HCT116 (cell line): ENCODE measurements at regions of chr20 and their contacts with region 1.

Region 1: DNA sequence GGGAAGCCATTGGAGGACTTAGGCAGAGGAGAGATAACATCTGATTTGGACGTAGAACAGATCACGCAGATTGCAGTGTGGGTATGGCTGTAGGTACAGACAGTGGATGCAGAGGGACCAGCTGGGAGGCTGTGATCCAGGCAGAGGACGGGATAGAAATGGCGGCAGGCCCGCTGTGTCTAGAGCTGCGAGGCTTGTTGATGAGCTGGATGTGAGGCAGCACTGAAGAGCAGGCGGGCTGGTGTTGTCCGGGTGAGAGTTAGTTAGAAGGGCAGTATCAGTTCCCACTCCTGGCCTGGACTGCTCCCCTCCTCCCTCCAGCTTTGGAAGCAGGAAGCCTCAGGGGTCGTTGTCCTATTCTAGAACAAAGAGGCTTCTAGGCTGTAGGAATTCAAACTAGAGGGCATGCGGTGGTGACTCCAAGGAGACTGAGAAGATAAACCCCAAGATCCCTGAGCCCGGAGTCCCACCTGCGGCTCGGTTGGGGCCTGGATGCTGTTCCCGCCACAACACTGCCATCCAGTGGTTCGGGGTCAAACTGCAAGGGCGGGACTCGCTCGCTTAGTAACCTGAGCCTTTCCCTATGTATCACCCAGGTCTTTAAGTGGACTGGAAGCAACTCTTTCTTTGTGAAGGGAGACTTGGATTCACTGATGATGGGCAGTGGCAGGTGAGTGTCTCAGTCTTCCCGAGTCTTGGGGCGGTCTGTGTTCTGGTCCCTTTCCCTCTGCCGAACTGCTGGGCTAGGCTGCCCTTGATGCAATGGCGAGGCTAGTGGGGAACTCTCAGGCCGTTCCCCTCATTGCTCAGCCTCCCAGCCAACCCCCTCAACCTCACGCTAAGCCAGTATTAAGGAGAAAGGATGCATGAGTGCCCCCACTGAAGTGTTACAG is 11.2 kb downstream of the TLDC2 start:
- DNase-seq: peak; percentile 59
- ATAC-seq: peak; percentile 95
- H3K4me3 ChIP-seq: no peak overlapping the region
- H3K27ac ChIP-seq: no peak overlapping the region
- H3K4me1 ChIP-seq: peaks cover 8 to 15% of the 10 kb centered on the region in 2 experiments; a peak in 3 of 4 replicates
- H3K27me3 ChIP-seq: no peaks in the 10 kb centered on the region
- CTCF ChIP-seq: peak; percentile 75 to 99 (median 94); a peak in 5 of 6 replicates
- POLR2A ChIP-seq: no peak
- RAD21 ChIP-seq: peak; percentile 93

Region 2: GRCh38 chr20:36574366-36575135 is 312.6 kb before region 1 on chr20:
- CTCF ChIA-PET with region 1: no interaction called
- POLR2A ChIA-PET with region 1: interaction called, 10 read pairs
- RAD21 ChIA-PET with region 1: no interaction called
- intact Hi-C with region 1: no loop called
- DNase-seq: no peak
- ATAC-seq: peak; percentile 48
- H3K4me3 ChIP-seq: peak overlapping the region; percentile 72 to 79
- H3K27ac ChIP-seq: peak overlapping the region; percentile 68
- H3K4me1 ChIP-seq: peaks cover 21 to 35% of the 10 kb centered on the region in 2 experiments
- H3K27me3 ChIP-seq: no peaks in the 10 kb centered on the region
- CTCF ChIP-seq: no peak
- POLR2A ChIP-seq: no peak
- RAD21 ChIP-seq: no peak

Region 3: DNA sequence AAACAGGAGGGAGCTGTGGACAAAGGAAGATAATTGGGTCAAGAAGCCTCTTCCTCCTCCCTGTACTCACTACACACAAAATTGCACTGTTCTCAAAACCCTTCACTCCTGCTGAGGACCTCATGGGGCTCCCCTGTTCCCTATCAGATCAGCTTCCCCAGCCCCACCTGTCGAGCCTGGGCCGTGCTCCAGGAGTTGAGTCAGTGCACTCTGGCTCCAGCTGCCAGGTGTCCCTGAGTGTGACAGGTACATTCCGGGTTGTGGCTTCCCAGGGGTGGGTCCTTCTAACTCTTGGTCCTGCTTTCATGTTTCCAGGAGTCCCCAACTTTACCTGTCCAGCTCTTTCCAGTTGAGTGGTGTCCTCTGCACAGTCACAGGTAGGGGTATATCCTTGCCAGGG is 273.1 kb before region 1 on chr20:
- CTCF ChIA-PET with region 1: interaction called, 6 read pairs
- POLR2A ChIA-PET with region 1: no interaction called
- RAD21 ChIA-PET with region 1: no interaction called
- intact Hi-C with region 1: loop called (anchors 10 kb)
- DNase-seq: no peak
- ATAC-seq: no peak; the same call in 1 of the 2 replicates
- H3K4me3 ChIP-seq: no peak overlapping the region
- H3K27ac ChIP-seq: 0 out of 2 replicates have a peak overlapping the region, but pooled peaks have one; percentile 10
- H3K4me1 ChIP-seq: peaks cover 0 to 13% of the 10 kb centered on the region in 2 experiments; a peak in 2 of 4 replicates
- H3K27me3 ChIP-seq: no peaks in the 10 kb centered on the region
- CTCF ChIP-seq: no peak
- POLR2A ChIP-seq: no peak
- RAD21 ChIP-seq: no peak

Region 4: DNA sequence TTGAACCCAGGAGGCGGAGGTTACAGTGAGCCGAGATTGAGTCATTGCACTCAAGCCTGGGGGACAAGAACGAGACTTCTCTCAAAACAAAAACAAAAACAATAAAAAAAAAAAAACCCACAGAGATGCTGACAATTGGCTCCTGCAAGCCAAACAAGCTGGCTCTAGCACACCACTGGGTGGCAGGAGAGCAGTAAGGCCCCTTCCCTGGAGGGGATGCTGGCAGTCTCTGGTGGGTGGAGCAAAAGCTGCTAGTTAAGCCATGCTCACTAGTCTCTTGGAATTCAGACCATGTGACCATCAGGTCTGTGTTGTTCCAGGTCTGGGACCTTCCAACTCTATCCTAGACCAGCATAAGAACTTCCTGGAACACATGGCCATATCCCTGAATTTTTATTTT is 94.7 kb before region 1 on chr20:
- CTCF ChIA-PET with region 1: interaction called, 4 read pairs
- POLR2A ChIA-PET with region 1: no interaction called
- RAD21 ChIA-PET with region 1: no interaction called
- intact Hi-C with region 1: loop called (anchors 1 kb)
- DNase-seq: peak; percentile 57
- ATAC-seq: peak; percentile 99
- H3K4me3 ChIP-seq: no peak overlapping the region
- H3K27ac ChIP-seq: no peak overlapping the region
- H3K4me1 ChIP-seq: peaks cover 0 to 2% of the 10 kb centered on the region in 2 experiments; a peak in 1 of 4 replicates
- H3K27me3 ChIP-seq: no peaks in the 10 kb centered on the region
- CTCF ChIP-seq: peak; percentile 45 to 67 (median 52); a peak in 5 of 6 replicates
- POLR2A ChIP-seq: no peak
- RAD21 ChIP-seq: peak; percentile 51

Region 5: DNA sequence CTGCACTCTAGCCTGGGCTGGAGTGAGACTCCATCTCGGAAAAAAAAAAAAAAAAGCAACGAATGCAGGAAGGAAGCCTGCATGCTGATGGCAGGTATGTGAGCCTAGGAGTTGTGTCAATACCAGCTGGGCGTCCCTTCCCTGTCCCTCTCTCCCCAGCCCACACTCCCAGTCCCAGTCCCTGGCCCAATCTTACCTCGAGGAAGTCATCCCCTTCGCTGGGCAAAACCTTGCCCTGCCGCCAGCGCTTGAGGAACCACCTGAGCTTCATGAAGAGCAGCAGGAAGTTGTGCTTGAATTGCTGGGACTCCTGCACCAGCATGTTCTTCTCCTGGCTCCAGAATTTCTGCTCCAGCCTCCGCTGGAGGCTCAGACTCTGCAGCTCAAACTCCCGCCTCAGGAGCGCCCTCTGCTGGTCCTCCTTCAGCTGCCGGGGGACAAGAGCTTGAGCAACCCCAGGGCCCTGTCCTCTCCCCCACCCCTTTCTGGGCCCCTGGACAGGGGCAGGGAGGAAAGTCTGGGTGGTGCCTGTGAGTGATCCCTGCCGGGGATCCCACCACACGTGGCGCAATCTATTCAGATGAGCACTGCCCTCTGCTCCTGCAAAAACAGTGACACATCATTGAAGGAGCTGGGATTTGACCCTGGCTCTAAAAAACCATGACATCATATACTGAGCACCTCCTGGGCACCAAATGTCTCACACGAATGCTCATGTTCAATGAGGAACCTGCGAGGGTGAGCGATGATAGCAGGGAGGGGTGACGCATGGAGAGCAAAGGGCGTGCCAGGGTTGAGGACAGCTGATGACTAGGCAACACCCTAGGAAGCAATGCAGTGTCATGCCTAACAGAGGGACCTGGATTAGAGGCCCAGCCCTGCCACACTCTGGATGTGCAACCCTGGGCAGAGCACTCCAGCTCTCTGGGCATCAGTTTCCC is 78.5 kb before region 1 on chr20:
- CTCF ChIA-PET with region 1: interaction called, 5 read pairs
- POLR2A ChIA-PET with region 1: no interaction called
- RAD21 ChIA-PET with region 1: no interaction called
- intact Hi-C with region 1: loop called (anchors 2 kb)
- DNase-seq: peak; percentile 42
- ATAC-seq: peak; percentile 83
- H3K4me3 ChIP-seq: no peak overlapping the region
- H3K27ac ChIP-seq: no peak overlapping the region
- H3K4me1 ChIP-seq: peaks cover 0 to 9% of the 10 kb centered on the region in 2 experiments; a peak in 1 of 4 replicates
- H3K27me3 ChIP-seq: no peaks in the 10 kb centered on the region
- CTCF ChIP-seq: peak; percentile 38 to 97 (median 95); a peak in 5 of 6 replicates
- POLR2A ChIP-seq: no peak
- RAD21 ChIP-seq: peak; percentile 52